Tibial artery (tissue), 4 donors: ENCODE measurements at regions of chr16 and their contacts with region 1.

Region 1: DNA sequence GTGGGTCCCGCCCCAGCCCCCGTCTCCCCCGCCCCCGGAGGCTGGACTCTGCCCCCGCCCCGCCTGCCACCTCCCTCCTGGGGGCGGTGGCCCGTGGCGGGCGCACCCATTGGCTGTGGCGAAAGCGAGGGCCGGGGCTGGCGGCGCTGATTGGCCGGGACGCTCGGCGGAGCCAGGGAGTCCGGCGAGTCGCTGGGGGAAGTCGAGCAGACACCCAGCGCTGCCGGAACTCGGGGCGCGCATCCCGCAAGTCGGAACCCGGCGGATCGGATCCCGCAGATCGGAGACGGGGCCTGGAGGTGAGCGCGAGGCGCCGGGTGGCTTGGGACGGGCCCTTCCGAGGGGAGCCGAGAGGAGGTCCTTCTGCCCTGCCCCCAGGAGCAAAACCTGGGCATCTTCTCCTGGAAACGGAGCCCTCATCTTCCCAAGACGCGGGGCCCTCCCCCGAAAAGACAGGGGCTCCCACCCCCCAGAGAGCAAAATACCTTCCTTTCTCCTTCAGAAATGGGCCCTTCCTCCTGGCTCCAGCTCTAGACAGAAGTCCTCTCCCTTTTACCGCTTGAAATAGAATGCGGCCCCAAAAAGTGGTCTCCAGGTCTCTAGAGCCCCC is at the start of gene ABAT:
- DNase-seq: peak; percentile 89 to 94
- H3K4me3 ChIP-seq: peak within 1 kb of the TSS; percentile 70 to 71
- H3K27ac ChIP-seq: peak within 1 kb of the TSS; percentile 39 to 66
- H3K4me1 ChIP-seq: peaks cover 0 to 17% (median 13%) of the 10 kb centered on the region in 4 donors
- H3K27me3 ChIP-seq: no peaks in the 10 kb centered on the region
- CTCF ChIP-seq: no peak

Region 2: GRCh38 chr16:8519179-8519578 is 155.3 kb before region 1 on chr16:
- intact Hi-C with region 1: no loop called
- DNase-seq: no peak
- H3K4me3 ChIP-seq: no peak overlapping the region
- H3K27ac ChIP-seq: no peak overlapping the region
- H3K4me1 ChIP-seq: no peaks in the 10 kb centered on the region
- H3K27me3 ChIP-seq: no peaks in the 10 kb centered on the region
- CTCF ChIP-seq: no peak

Region 3: DNA sequence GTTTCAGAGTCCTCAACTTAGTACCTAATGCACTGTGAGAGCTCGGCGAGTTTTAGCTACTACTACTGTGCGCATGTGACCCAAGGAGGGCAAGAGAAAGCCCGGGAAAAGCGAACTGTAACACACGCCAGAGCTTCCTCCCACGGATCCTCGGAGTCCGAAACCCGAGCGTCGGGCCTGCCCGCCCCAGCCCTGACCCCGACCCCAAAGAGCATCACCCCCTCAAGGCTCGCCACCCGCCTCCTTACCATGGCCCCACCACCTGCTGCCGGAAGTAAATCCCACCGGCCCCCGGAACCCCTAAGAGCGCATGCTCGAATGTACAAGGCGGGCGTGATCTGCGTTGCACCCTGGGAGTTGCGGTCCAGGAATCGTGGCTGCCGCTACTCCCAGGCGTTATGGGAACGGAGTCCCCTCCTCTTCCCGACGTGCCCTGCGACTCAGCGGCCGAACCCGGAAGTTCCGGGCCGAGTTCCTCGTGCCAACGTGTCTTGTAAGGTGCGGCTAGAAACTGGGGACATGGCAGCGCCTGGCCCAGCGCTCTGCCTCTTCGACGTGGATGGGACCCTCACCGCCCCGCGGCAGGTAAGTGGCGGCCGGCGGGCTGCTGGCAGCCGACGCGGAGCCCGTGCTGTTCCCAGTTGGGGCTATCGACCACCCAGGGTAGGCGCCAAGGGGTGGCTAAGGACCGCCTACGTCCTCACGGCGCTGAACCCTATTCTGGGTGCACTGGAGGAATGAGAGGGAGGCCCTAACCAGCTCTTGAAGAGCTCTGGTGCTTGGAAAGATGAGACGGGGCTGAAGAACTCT is 123.1 kb after region 1 on chr16 and contains the starts of genes PMM2 and TMEM186:
- intact Hi-C with region 1: loop called (anchors 10 kb)
- DNase-seq: peak; percentile 96 to 98
- H3K4me3 ChIP-seq: peak within 1 kb of the TSS; percentile 94 to 98
- H3K27ac ChIP-seq: peak within 1 kb of the TSS; percentile 83 to 86
- H3K4me1 ChIP-seq: peaks cover 0 to 62% (median 30%) of the 10 kb centered on the region in 4 donors
- H3K27me3 ChIP-seq: no peaks in the 10 kb centered on the region
- CTCF ChIP-seq: peak in 1 of 2 experiments; percentile 41

Region 4: DNA sequence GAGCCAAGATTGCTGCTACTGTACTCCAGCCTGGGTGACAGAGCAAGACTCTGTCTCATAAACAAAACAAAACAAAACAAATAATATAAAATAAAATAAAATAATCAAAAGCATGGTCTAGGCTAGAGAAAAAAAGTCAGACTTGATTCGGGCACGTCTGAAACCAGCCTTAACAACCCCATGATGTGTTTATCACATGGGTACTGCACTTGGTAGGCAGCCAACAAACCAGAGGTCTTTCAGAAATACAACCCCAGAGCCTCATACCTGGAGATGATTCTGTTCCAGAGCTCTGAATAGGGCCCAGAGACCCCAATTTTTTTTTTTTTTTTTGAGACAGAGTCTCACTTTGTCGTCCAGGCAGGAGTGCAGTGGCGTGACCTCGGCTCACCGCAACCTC is 407.3 kb after region 1 on chr16:
- intact Hi-C with region 1: loop called (anchors 10 kb)
- DNase-seq: no peak
- H3K4me3 ChIP-seq: no peak overlapping the region
- H3K27ac ChIP-seq: no peak overlapping the region
- H3K4me1 ChIP-seq: no peaks in the 10 kb centered on the region
- H3K27me3 ChIP-seq: no peaks in the 10 kb centered on the region
- CTCF ChIP-seq: no peak